CD8-positive, alpha-beta T cell (primary cell): ENCODE measurements at regions of chr1 and their contacts with region 1.

Region 1: DNA sequence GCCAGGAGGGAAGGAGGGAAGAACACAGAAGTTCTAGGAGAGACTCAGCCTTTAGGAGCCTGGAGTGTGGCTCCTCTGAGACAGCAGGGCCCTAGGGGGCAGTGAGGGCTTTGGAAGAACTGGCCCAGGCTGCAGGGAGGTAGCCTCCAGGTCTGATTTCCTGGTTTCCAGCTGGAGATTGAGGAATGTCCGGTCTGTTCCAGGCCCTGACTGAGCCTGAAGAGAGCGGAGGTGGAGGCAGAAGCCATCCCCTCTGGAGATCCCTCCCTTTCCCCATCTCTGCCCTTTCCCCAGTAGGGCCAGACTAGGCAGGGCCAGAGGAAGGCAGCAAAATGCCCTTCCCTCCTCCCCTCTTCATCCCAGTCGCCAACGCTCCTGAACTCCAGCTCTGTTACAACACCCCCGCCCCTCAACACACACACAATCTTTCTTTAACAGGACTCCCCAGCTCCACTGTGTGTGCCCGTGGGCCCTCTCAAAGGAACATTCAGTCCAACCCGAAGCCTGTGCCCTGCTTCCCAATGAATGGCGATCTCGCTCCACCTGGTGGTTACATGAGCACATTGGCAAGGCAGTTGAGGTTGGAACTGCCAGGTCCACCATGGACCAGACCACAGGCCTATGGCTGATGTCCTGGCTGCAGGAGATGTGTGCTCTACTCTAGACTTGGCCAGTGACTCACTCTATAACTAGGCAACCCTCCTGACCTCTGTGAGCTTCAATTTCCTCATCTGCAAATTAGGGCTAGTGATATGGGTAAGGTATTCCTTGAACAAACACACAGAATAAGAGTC is 32.0 kb downstream of the MAP7D1 start:
- DNase-seq: peak; percentile 63 to 91 (median 80)
- ATAC-seq: peak; percentile 100
- H3K4me3 ChIP-seq: no peak overlapping the region
- H3K4me3 Mint-ChIP-seq: no peak overlapping the region
- H3K27ac ChIP-seq: peak overlapping the region in 1 of 2 experiments; percentile 31
- H3K27ac Mint-ChIP-seq: peak overlapping the region; percentile 49
- H3K4me1 ChIP-seq: peaks cover 6% of the 10 kb centered on the region
- H3K4me1 Mint-ChIP-seq: peaks cover 3% of the 10 kb centered on the region
- H3K27me3 ChIP-seq: no peaks in the 10 kb centered on the region
- H3K27me3 Mint-ChIP-seq: no peaks in the 10 kb centered on the region
- CTCF ChIP-seq: peak; percentile 74

Region 2: DNA sequence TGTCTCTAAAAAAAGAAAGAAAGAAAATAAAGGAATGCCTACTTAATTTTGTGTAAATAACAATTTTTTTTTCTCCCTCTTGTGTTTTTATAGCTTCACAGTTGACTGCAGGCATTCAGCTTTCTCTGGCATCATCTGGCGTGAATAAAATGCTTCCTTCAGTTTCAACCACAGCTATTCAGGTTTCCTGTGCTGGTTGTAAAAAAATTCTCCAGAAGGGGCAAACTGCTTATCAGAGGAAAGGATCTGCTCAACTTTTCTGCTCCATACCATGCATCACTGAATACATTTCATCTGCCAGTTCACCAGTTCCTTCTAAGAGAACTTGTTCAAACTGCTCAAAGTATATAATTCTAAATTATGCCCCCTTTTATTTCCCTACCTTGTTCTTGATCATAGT is 1090.8 kb before region 1 on chr1:
- CTCF ChIA-PET with region 1: no interaction called
- POLR2A ChIA-PET with region 1: no interaction called
- intact Hi-C with region 1: no loop called
- DNase-seq: no peak
- ATAC-seq: no peak
- H3K4me3 ChIP-seq: no peak overlapping the region
- H3K4me3 Mint-ChIP-seq: no peak overlapping the region
- H3K27ac ChIP-seq: no peak overlapping the region
- H3K27ac Mint-ChIP-seq: no peak overlapping the region
- H3K4me1 ChIP-seq: no peaks in the 10 kb centered on the region
- H3K4me1 Mint-ChIP-seq: no peaks in the 10 kb centered on the region
- H3K27me3 ChIP-seq: no peaks in the 10 kb centered on the region
- H3K27me3 Mint-ChIP-seq: no peaks in the 10 kb centered on the region
- CTCF ChIP-seq: no peak

Region 3: DNA sequence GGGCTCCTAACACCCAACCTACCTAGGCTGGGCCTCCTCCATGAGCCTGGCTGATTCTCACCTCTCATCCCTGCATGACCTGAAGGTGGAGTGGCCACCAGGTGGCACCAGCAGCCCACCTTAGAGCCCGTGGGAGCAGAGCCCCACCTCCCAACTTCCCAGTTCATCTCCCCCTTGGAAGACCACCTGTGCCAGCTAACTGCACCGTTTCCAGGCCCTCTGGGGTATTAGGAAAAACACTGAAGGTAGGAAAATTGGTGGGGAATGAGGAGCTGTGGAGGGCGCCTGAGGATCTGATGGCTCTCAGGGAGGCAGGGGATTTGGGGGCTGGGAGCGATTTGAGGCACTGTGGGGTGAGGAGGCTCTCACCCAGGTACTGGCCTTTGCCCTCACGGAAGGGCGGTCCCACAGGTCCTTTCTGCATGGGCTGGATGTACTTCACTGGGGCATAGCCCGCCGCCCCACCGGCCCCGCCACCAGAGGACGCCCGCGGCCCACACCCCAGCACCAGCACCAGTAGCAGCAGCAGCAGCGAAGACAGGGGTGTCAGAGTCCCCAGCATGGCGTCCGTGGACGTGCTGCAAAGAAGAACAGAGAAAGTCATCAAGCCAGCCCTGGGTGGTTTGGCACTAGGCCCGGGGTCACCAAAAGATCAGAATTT is 88.2 kb before region 1 on chr1:
- CTCF ChIA-PET with region 1: interaction called, 15 read pairs
- POLR2A ChIA-PET with region 1: interaction called, 3 read pairs
- intact Hi-C with region 1: loop called (anchors 1 kb)
- DNase-seq: peak; percentile 55 to 89 (median 80)
- ATAC-seq: peak; percentile 88
- H3K4me3 ChIP-seq: peak overlapping the region in 1 of 2 experiments; percentile 7
- H3K4me3 Mint-ChIP-seq: no peak overlapping the region
- H3K27ac ChIP-seq: no peak overlapping the region
- H3K27ac Mint-ChIP-seq: no peak overlapping the region
- H3K4me1 ChIP-seq: peaks cover 8% of the 10 kb centered on the region
- H3K4me1 Mint-ChIP-seq: peaks cover 4% of the 10 kb centered on the region
- H3K27me3 ChIP-seq: no peaks in the 10 kb centered on the region
- H3K27me3 Mint-ChIP-seq: no peaks in the 10 kb centered on the region
- CTCF ChIP-seq: peak; percentile 83

Region 4: GRCh38 chr1:36143424-36143823 is 44.6 kb before region 1 on chr1:
- CTCF ChIA-PET with region 1: interaction called, 245 read pairs
- POLR2A ChIA-PET with region 1: interaction called, 42 read pairs
- intact Hi-C with region 1: loop called in 1 of 2 experiments (anchors 10 kb)
- DNase-seq: no peak
- ATAC-seq: no peak
- H3K4me3 ChIP-seq: no peak overlapping the region
- H3K4me3 Mint-ChIP-seq: no peak overlapping the region
- H3K27ac ChIP-seq: no peak overlapping the region
- H3K27ac Mint-ChIP-seq: no peak overlapping the region
- H3K4me1 ChIP-seq: peaks cover 9% of the 10 kb centered on the region
- H3K4me1 Mint-ChIP-seq: peaks cover 44% of the 10 kb centered on the region
- H3K27me3 ChIP-seq: no peaks in the 10 kb centered on the region
- H3K27me3 Mint-ChIP-seq: no peaks in the 10 kb centered on the region
- CTCF ChIP-seq: no peak

Region 5: DNA sequence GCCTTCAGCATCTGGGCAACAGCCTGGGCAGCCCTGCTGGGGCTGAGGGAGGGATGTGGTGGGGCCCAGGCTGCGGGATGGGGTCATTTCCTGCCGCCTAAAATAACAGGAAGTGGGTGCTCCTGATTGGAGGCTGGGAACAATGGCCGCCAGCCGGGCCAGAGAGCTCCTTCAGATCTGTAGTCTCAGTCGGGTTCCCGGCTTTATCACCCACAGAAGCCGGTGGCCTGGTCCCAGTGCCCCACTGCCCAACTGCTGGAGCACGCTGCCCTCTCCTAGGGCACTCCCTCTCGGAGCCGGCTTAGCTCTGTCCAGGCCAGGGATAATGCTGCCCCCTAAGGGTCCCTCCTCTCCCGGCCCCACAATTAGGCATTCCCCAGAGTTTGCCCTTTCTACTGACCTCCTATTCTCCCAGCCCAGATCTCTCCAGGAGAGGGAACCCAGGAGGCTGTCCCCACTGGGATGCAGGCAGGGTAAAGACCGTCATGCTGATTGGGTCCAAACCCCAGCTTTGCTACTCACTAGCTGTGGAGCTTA is 27.0 kb before region 1 on chr1:
- CTCF ChIA-PET with region 1: interaction called, 245 read pairs
- POLR2A ChIA-PET with region 1: interaction called, 18 read pairs
- intact Hi-C with region 1: loop called in 1 of 2 experiments (anchors 1 kb)
- DNase-seq: peak; percentile 25 to 84 (median 68)
- ATAC-seq: peak; percentile 9
- H3K4me3 ChIP-seq: peak overlapping the region; percentile 52 to 59
- H3K4me3 Mint-ChIP-seq: peak overlapping the region; percentile 76
- H3K27ac ChIP-seq: peak overlapping the region; percentile 87 to 93
- H3K27ac Mint-ChIP-seq: peak overlapping the region; percentile 91
- H3K4me1 ChIP-seq: peaks cover 61% of the 10 kb centered on the region
- H3K4me1 Mint-ChIP-seq: peaks cover 71% of the 10 kb centered on the region
- H3K27me3 ChIP-seq: no peaks in the 10 kb centered on the region
- H3K27me3 Mint-ChIP-seq: no peaks in the 10 kb centered on the region
- CTCF ChIP-seq: no peak

Region 6: GRCh38 chr1:36203554-36204346 is 15.8 kb after region 1 on chr1:
- CTCF ChIA-PET with region 1: interaction called, 10 read pairs
- POLR2A ChIA-PET with region 1: no interaction called
- intact Hi-C with region 1: no loop called
- DNase-seq: no peak
- ATAC-seq: no peak
- H3K4me3 ChIP-seq: no peak overlapping the region
- H3K4me3 Mint-ChIP-seq: no peak overlapping the region
- H3K27ac ChIP-seq: no peak overlapping the region
- H3K27ac Mint-ChIP-seq: no peak overlapping the region
- H3K4me1 ChIP-seq: no peaks in the 10 kb centered on the region
- H3K4me1 Mint-ChIP-seq: no peaks in the 10 kb centered on the region
- H3K27me3 ChIP-seq: no peaks in the 10 kb centered on the region
- H3K27me3 Mint-ChIP-seq: peaks cover 2% of the 10 kb centered on the region
- CTCF ChIP-seq: no peak

Region 7: GRCh38 chr1:36285448-36286101 is 97.6 kb after region 1 on chr1:
- CTCF ChIA-PET with region 1: interaction called, 28 read pairs
- POLR2A ChIA-PET with region 1: no interaction called
- intact Hi-C with region 1: loop called (anchors 1 kb)
- DNase-seq: peak; percentile 32 to 91 (median 65)
- ATAC-seq: peak; percentile 98
- H3K4me3 ChIP-seq: no peak overlapping the region
- H3K4me3 Mint-ChIP-seq: no peak overlapping the region
- H3K27ac ChIP-seq: no peak overlapping the region
- H3K27ac Mint-ChIP-seq: peak overlapping the region; percentile 9
- H3K4me1 ChIP-seq: peaks cover 4% of the 10 kb centered on the region
- H3K4me1 Mint-ChIP-seq: peaks cover 11% of the 10 kb centered on the region
- H3K27me3 ChIP-seq: no peaks in the 10 kb centered on the region
- H3K27me3 Mint-ChIP-seq: no peaks in the 10 kb centered on the region
- CTCF ChIP-seq: peak; percentile 68